IMR-90 (cell line): ENCODE measurements at regions of chr1 and their contacts with region 1.

Region 1: DNA sequence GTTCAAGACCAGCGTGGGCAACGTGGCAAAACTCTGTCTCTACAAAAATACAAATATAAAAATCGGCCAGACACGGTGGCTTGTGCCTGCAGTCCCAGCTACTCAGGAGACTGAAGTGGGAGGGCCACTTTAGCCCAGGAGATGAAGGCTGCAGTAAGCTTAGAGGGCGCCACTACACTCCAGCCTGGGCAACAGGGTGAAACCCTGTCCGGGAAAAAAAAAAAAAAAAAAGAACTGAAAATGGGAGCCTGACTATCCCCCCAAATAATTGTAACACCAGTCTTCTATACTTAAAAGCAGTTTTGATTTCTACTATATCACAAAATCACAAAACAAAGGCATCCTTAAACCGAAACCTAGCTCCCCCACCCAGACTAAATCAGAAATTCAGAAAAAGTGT is 60.3 kb downstream of the CDC42BPA start:
- DNase-seq: no peak
- ATAC-seq: no peak
- H3K4me3 ChIP-seq: no peak overlapping the region
- H3K27ac ChIP-seq: no peak overlapping the region
- H3K4me1 ChIP-seq: no peaks in the 10 kb centered on the region
- H3K27me3 ChIP-seq: no peaks in the 10 kb centered on the region
- CTCF ChIP-seq: no peak
- POLR2A ChIP-seq: no peak
- RAD21 ChIP-seq: no peak

Region 2: DNA sequence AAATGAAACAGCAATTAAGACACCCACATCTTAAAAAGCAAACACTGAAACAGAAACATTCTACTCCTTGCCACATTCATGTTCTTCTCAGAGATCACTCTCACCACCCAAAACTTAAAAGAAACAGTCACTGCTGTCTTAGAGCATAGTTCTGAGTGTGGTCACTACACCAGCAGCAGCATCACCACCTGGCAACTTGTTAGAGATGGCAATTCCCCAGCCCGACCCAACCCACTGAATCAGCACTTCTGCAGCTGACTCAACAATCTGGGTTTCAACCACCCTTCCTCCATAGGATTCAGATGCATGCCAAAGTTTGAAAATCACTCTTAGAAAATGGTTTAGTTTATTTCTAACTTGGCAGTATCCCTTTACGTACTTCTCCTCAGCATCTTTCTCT is 65.8 kb before region 1 on chr1:
- CTCF ChIA-PET with region 1: no interaction called
- POLR2A ChIA-PET with region 1: no interaction called
- dilution Hi-C with region 1: no loop called
- in situ Hi-C with region 1: no loop called
- intact Hi-C with region 1: loop called (anchors 5 kb)
- DNase-seq: peak; percentile 98
- ATAC-seq: peak; percentile 98
- H3K4me3 ChIP-seq: no peak overlapping the region
- H3K27ac ChIP-seq: no peak overlapping the region
- H3K4me1 ChIP-seq: no peaks in the 10 kb centered on the region
- H3K27me3 ChIP-seq: no peaks in the 10 kb centered on the region
- CTCF ChIP-seq: no peak
- POLR2A ChIP-seq: no peak
- RAD21 ChIP-seq: no peak

Region 3: GRCh38 chr1:227214207-227214606 is 43.8 kb before region 1 on chr1:
- CTCF ChIA-PET with region 1: no interaction called
- POLR2A ChIA-PET with region 1: no interaction called
- dilution Hi-C with region 1: no loop called
- in situ Hi-C with region 1: no loop called
- intact Hi-C with region 1: loop called (anchors 5 kb)
- DNase-seq: no peak
- ATAC-seq: no peak
- H3K4me3 ChIP-seq: no peak overlapping the region
- H3K27ac ChIP-seq: no peak overlapping the region
- H3K4me1 ChIP-seq: no peaks in the 10 kb centered on the region
- H3K27me3 ChIP-seq: no peaks in the 10 kb centered on the region
- CTCF ChIP-seq: no peak
- POLR2A ChIP-seq: no peak
- RAD21 ChIP-seq: no peak

Region 4: DNA sequence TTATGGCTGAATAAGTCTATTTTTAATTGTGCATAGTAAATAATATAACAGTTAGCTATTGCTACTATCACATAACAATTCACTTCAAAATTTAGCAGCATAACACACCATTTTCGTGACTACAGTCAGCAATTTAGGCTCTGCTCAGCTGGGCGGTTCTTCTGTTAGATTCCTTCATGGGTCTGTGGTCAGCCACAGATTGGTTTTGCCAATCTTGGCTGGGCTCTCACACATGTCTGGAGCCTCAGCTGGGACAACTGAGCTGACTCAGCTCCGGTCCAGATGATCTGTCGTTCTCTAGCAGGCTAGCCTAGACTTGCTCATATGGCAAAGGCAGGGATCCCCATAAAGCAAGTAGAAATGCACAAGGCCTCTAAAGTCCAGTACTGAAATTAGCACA is 75.5 kb after region 1 on chr1:
- CTCF ChIA-PET with region 1: no interaction called
- POLR2A ChIA-PET with region 1: no interaction called
- dilution Hi-C with region 1: no loop called
- in situ Hi-C with region 1: no loop called
- intact Hi-C with region 1: no loop called
- DNase-seq: no peak
- ATAC-seq: no peak
- H3K4me3 ChIP-seq: no peak overlapping the region
- H3K27ac ChIP-seq: no peak overlapping the region
- H3K4me1 ChIP-seq: no peaks in the 10 kb centered on the region
- H3K27me3 ChIP-seq: no peaks in the 10 kb centered on the region
- CTCF ChIP-seq: no peak
- POLR2A ChIP-seq: no peak
- RAD21 ChIP-seq: no peak